ENCODE measurements at regions of chr12 and their contacts with region 1.

Region 1: GRCh38 chr12:53174881-53175491 is 5.5 kb upstream of the ZNF740 start:
- DNase-seq: peak; percentile 28
- H3K4me3 ChIP-seq: no peak overlapping the region
- H3K27ac ChIP-seq: no peak overlapping the region
- H3K4me1 ChIP-seq: peaks cover 5% of the 10 kb centered on the region
- H3K27me3 ChIP-seq: no peaks in the 10 kb centered on the region
- CTCF ChIP-seq: peak; percentile 7 to 25
- POLR2A ChIP-seq: no peak

Region 2: GRCh38 chr12:52956987-52957386 is 218.0 kb before region 1 on chr12:
- CTCF ChIA-PET with region 1: no interaction called
- POLR2A ChIA-PET with region 1: no interaction called
- dilution Hi-C with region 1: no loop called
- intact Hi-C with region 1: no loop called
- DNase-seq: no peak
- H3K4me3 ChIP-seq: no peak overlapping the region
- H3K27ac ChIP-seq: no peak overlapping the region
- H3K4me1 ChIP-seq: no peaks in the 10 kb centered on the region
- H3K27me3 ChIP-seq: no peaks in the 10 kb centered on the region
- CTCF ChIP-seq: no peak
- POLR2A ChIP-seq: no peak

Region 3: DNA sequence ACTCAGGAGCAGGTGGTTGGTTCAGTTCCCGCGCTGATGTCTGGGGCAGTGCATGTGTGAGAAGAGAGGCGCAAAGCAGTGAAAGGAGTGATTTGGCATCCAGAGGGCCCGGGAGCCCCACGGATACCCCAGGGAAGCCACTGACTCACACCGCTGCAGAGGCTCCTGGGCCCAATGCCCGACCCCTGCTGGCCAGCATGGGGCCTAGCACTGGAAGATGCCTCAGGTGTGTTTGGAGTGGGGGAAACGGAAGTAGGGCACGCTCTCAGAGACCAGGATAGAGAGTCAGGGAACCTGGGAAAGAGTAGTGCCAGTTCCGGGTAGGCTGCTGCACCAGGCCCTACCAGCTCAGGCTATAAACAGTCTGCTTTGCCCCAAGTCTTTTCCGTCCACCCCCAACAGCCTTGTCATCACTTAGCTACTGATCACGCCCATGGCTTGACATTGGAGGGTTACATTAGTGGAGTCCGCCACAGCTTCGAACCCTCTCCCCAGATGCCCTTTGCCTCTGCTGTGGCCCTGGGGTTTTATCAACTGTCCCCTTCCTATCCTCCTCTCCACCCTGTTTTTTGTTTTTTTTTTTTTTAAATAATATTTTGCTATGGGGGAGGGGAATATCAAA is 15.2 kb after region 1 on chr12:
- CTCF ChIA-PET with region 1: interaction called, 19 read pairs
- POLR2A ChIA-PET with region 1: no interaction called
- dilution Hi-C with region 1: no loop called
- intact Hi-C with region 1: no loop called
- DNase-seq: peak; percentile 49
- H3K4me3 ChIP-seq: no peak overlapping the region
- H3K27ac ChIP-seq: no peak overlapping the region
- H3K4me1 ChIP-seq: peaks cover 4% of the 10 kb centered on the region
- H3K27me3 ChIP-seq: no peaks in the 10 kb centered on the region
- CTCF ChIP-seq: peak; percentile 73 to 86
- POLR2A ChIP-seq: no peak

Measured in endothelial cell of umbilical vein (primary cell).